Esophagus muscularis mucosa (tissue), 4 donors: ENCODE measurements at regions of chr10 and their contacts with region 1.

Region 1: GRCh38 chr10:77649333-77650331 is 12.0 kb upstream of the KCNMA1 start:
- DNase-seq: no peak
- H3K4me3 ChIP-seq: no peak overlapping the region
- H3K27ac ChIP-seq: no peak overlapping the region
- H3K4me1 ChIP-seq: no peaks in the 10 kb centered on the region
- H3K27me3 ChIP-seq: no peaks in the 10 kb centered on the region
- CTCF ChIP-seq: no peak
- EP300 ChIP-seq: no peak
- POLR2A ChIP-seq: no peak

Region 2: GRCh38 chr10:77029777-77030717 is 619.6 kb before region 1 on chr10:
- intact Hi-C with region 1: loop called (anchors 5 kb)
- DNase-seq: no peak
- H3K4me3 ChIP-seq: no peak overlapping the region
- H3K27ac ChIP-seq: no peak overlapping the region
- H3K4me1 ChIP-seq: peaks cover 0 to 7% (median 4%) of the 10 kb centered on the region in 4 donors
- H3K27me3 ChIP-seq: no peaks in the 10 kb centered on the region
- CTCF ChIP-seq: no peak
- EP300 ChIP-seq: no peak
- POLR2A ChIP-seq: no peak

Region 3: GRCh38 chr10:77391605-77392235 is 257.9 kb before region 1 on chr10:
- intact Hi-C with region 1: no loop called
- DNase-seq: no peak
- H3K4me3 ChIP-seq: no peak overlapping the region
- H3K27ac ChIP-seq: peak overlapping the region; percentile 73 to 82 (median 79)
- H3K4me1 ChIP-seq: peaks cover 13 to 85% (median 77%) of the 10 kb centered on the region in 4 donors
- H3K27me3 ChIP-seq: no peaks in the 10 kb centered on the region
- CTCF ChIP-seq: peak; percentile 61 to 73 (median 64)
- EP300 ChIP-seq: no peak
- POLR2A ChIP-seq: no peak